ENCODE measurements at regions of chr12 and their contacts with region 1.

Region 1: DNA sequence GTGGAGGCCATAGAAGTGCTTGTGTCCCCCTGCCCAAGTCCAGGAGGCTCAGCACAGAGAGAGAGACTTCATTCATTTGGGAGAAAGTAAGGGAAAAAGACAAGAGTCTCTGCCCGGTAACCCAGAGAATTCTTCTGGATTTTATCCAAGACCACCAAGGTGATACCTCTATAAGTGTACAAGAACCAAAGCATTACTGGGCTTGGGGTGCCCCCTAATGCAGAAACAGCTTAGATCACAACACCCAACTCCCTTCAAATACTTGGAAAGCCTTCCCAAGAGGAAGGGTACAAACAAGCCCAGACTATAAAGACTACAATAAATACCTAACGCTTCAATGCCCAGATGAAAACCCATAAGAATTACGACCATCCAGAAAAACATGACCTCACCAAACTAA is 119.7 kb upstream of the PDE3A start:
- DNase-seq: no peak
- ATAC-seq: no peak
- H3K4me3 ChIP-seq: no peak overlapping the region
- H3K4me3 Mint-ChIP-seq: no peak overlapping the region
- H3K27ac ChIP-seq: no peak overlapping the region
- H3K27ac Mint-ChIP-seq: no peak overlapping the region
- H3K4me1 ChIP-seq: no peaks in the 10 kb centered on the region
- H3K4me1 Mint-ChIP-seq: no peaks in the 10 kb centered on the region
- H3K27me3 ChIP-seq: no peaks in the 10 kb centered on the region
- H3K27me3 Mint-ChIP-seq: peaks cover 2% of the 10 kb centered on the region
- CTCF ChIP-seq: no peak

Region 2: GRCh38 chr12:20829919-20830318 is 581.3 kb after region 1 on chr12:
- CTCF ChIA-PET with region 1: no interaction called
- POLR2A ChIA-PET with region 1: no interaction called
- intact Hi-C with region 1: loop called in 1 of 2 experiments (anchors 5 kb)
- DNase-seq: no peak
- ATAC-seq: no peak
- H3K4me3 ChIP-seq: no peak overlapping the region
- H3K4me3 Mint-ChIP-seq: no peak overlapping the region
- H3K27ac ChIP-seq: no peak overlapping the region
- H3K27ac Mint-ChIP-seq: no peak overlapping the region
- H3K4me1 ChIP-seq: no peaks in the 10 kb centered on the region
- H3K4me1 Mint-ChIP-seq: no peaks in the 10 kb centered on the region
- H3K27me3 ChIP-seq: no peaks in the 10 kb centered on the region
- H3K27me3 Mint-ChIP-seq: no peaks in the 10 kb centered on the region
- CTCF ChIP-seq: no peak